ENCODE measurements at regions of chr16 and their contacts with region 1.

Region 1: DNA sequence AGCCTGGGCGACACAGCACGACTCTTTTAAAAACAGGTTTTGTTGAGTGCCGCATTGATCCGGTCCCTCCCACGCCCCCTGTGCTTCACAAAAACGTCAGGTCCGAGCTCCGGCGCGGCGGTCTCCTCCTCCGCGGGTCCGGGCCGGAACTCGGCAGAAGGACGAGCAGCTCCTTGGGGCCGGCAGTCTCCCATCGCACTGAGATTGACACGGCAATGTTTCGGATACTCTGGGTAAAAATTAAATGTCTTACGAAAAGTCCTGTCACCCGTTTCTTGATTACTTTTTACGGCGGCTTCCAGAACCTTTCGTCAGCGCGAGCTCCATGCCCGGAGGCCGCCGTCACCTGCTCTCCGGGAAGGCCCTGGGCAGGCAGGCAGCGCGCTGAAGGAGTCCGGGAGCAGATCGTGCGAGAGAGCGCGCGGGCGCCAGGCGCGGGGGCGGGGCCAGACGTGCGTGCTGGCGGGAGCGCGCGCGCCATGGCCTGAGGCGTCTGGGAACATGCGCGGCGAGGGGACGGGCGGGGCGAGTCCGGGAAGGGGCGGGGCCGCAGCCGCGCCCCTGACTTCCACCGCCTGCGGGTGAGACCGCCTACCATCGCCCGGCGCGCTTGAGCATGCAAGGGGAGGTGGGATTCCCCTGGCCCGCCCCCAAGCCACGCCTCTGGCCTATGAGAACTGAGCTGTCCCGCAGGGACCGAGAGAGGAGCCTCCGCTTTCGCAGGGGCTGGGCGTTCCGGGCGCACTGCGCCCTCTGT is 11.7 kb upstream of the SRL start:
- DNase-seq: peak; percentile 99 to 100 (median 100)
- ATAC-seq: peak; percentile 97 to 99 (median 98)
- H3K4me3 ChIP-seq: peak overlapping the region; percentile 23 to 79 (median 63)
- H3K27ac ChIP-seq: peak overlapping the region; percentile 56 to 96 (median 94)
- H3K4me1 ChIP-seq: peaks cover 0 to 11% (median 3%) of the 10 kb centered on the region in 12 donors
- H3K27me3 ChIP-seq: no peaks in the 10 kb centered on the region
- CTCF ChIP-seq: no peak
- POLR2A ChIP-seq: peak in 1 of 2 donors; percentile 69

Region 2: GRCh38 chr16:3945751-3946603 is 307.6 kb before region 1 on chr16:
- intact Hi-C with region 1: loop called in 1 of 10 experiments (anchors 10 kb)
- DNase-seq: peak in 2 of 5 donors; percentile 54 to 64
- ATAC-seq: no peak
- H3K4me3 ChIP-seq: no peak overlapping the region
- H3K27ac ChIP-seq: peak overlapping the region in 2 of 12 donors; percentile 12 to 36
- H3K4me1 ChIP-seq: peaks cover 4 to 34% (median 23%) of the 10 kb centered on the region in 12 donors
- H3K27me3 ChIP-seq: no peaks in the 10 kb centered on the region
- CTCF ChIP-seq: no peak
- POLR2A ChIP-seq: no peak

Region 3: DNA sequence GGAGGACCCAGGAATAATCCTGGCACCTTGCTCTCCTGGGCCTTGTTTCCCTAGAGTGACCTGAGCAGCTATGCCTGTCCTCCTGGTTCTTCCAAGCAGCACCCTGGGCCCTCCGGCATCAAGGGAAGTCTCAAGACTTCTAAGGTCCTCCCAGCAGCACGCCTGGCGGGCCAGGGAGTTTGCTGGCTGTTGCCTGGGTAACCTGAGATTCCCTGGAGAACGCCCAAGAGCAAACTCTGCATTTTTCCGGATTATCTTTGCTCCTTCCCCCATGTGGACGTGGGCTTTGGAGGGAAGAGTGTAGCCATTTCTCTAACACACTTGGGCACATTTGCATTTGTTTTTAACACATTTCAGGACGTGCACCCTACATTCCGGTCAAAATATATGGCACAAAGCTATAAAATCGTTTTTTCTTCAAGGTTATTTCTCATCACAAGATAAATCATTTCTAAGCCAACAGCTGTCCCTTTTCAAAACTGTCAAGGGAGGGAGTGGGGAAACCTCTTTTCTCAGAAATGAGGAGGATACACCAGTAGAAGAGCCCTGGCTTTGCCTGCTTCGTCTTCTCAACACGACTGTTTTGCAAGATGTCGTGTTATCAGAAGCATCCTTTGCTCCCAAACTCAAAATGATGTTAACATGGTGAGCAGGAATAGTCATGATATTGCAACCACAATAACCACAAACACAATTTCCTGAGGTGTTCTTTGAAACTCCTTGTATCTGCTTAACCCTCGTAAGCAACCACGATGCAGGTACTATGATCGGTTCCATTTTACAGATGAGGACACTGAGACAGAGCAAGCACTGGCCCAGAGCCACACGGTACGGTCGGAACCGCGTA is 253.9 kb before region 1 on chr16:
- intact Hi-C with region 1: loop called in 1 of 10 experiments (anchors 10 kb)
- DNase-seq: peak; percentile 52 to 81 (median 63)
- ATAC-seq: peak; percentile 17 to 68 (median 56)
- H3K4me3 ChIP-seq: peak overlapping the region in 3 of 12 donors; percentile 6 to 17 (median 10)
- H3K27ac ChIP-seq: peak overlapping the region in 8 of 12 donors; percentile 8 to 72 (median 52)
- H3K4me1 ChIP-seq: peaks cover 0 to 34% (median 15%) of the 10 kb centered on the region in 12 donors
- H3K27me3 ChIP-seq: no peaks in the 10 kb centered on the region
- CTCF ChIP-seq: no peak
- POLR2A ChIP-seq: no peak

Region 4: GRCh38 chr16:4183237-4184036 is 70.1 kb before region 1 on chr16:
- intact Hi-C with region 1: loop called in 1 of 10 experiments (anchors 1 kb)
- DNase-seq: peak; percentile 93 to 98 (median 94)
- ATAC-seq: peak; percentile 79 to 96 (median 96)
- H3K4me3 ChIP-seq: peak overlapping the region; percentile 43 to 90 (median 76)
- H3K27ac ChIP-seq: peak overlapping the region; percentile 89 to 99 (median 96)
- H3K4me1 ChIP-seq: peaks cover 0 to 17% (median 7%) of the 10 kb centered on the region in 12 donors
- H3K27me3 ChIP-seq: peaks cover 0 to 12% (median 0%) of the 10 kb centered on the region in 9 donors
- CTCF ChIP-seq: peak in 5 of 12 donors; percentile 14 to 51 (median 43)
- POLR2A ChIP-seq: peak in 1 of 2 donors; percentile 83

Region 5: GRCh38 chr16:4208341-4208751 is 45.2 kb before region 1 on chr16:
- intact Hi-C with region 1: loop called in 3 of 10 experiments (anchors 5 kb)
- DNase-seq: peak in 4 of 5 donors; percentile 54 to 72 (median 62)
- ATAC-seq: peak in 2 of 4 donors; percentile 8 to 18
- H3K4me3 ChIP-seq: no peak overlapping the region
- H3K27ac ChIP-seq: peak overlapping the region; percentile 41 to 96 (median 70)
- H3K4me1 ChIP-seq: peaks cover 5 to 84% (median 42%) of the 10 kb centered on the region in 12 donors
- H3K27me3 ChIP-seq: no peaks in the 10 kb centered on the region
- CTCF ChIP-seq: no peak
- POLR2A ChIP-seq: no peak

Region 6: DNA sequence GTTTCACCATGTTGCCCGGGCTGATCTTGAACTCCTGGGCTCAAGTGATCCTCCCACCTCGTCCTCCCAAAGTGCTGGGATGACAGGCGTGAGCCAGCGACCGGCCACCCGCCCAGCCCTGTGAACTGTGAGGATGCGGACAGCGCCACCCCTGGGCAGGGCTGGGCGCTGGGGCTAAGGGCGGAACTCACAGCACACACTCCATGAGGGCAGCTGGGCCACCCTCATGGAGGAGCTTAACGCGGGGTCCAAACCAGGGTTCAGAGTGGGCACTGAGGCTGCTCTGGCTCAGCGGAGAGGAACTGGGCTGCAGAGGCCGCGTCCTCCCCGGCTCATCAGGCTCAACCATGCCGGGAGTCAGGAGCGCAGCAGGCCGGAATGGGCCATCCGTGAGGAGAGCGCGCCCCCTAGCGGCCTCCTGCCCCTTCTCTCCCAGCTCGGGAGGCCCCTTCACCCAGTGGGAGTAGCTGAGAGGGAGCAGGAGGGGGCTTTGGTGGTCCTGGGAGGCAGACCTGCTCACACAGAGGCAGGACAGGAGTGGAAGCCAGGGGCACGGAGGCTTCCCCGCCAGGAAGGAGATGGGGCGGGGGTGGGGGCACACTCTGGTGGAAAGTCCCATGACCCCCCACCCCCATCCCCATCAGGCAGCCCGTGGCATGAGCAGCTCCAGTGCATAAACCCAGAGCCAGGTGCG is 149.0 kb after region 1 on chr16:
- intact Hi-C with region 1: loop called in 1 of 10 experiments (anchors 10 kb)
- DNase-seq: peak; percentile 80 to 92 (median 84)
- ATAC-seq: peak; percentile 77 to 96 (median 94)
- H3K4me3 ChIP-seq: peak overlapping the region in 3 of 12 donors; percentile 2 to 31 (median 17)
- H3K27ac ChIP-seq: peak overlapping the region in 1 of 12 donors; percentile 27
- H3K4me1 ChIP-seq: peaks cover 0 to 9% (median 4%) of the 10 kb centered on the region in 12 donors
- H3K27me3 ChIP-seq: no peaks in the 10 kb centered on the region
- CTCF ChIP-seq: peak; percentile 82 to 94 (median 90)
- POLR2A ChIP-seq: no peak

Region 7: DNA sequence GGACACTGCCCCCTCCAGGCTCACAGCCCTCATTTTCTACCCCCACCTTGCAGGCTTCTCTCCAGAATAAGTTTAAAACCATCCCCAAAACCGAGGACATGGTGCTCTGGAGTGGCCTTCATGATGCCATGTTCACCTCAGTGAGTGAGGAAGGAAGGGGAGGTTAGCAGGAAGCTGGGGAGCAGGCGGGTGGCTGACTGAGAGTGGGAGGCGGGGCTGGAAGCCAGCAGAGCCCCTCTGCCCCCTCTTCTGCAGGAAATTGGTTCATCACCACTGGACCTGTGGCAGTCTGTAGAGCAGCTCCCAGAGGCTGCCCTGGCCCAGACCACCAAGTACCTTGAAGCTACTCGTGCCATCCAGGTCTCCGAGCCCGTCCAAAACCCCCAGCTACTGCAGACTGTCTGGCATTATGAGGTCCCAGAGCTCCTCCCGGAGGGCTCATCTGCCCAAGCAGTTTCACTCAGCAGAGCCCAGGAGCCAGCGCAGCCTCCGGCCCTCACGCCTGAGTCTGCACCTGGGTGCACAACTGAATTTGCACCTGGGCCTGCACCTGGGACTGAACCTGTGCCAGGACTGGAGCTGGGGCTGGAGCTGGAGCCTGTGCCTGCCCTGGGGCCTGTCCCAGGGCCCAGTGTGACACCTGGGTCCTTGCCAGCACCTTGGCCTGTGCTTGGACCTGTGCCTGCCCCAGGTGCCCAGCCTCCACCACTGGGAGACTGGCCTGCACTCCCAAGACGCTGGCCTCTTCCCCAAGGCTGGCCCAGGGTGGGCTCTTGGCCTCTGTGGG is 321.5 kb after region 1 on chr16:
- intact Hi-C with region 1: no loop called
- DNase-seq: no peak
- ATAC-seq: peak in 1 of 4 donors; percentile 29
- H3K4me3 ChIP-seq: no peak overlapping the region
- H3K27ac ChIP-seq: no peak overlapping the region
- H3K4me1 ChIP-seq: no peaks in the 10 kb centered on the region
- H3K27me3 ChIP-seq: no peaks in the 10 kb centered on the region
- CTCF ChIP-seq: no peak
- POLR2A ChIP-seq: no peak